Activated T-helper 1 cell treated with anti-CD3 and anti-CD28 coated beads, Interleukin-12 subunit alpha, Interleukin-12 subunit beta, Interleukin-2, Interleukin-4 antibody, amounts not matched to agents 30 ng/mL and 10 ng/mL and 1 ng/mL, durations not matched to agents 14 hours and 24 hours and 36 hours (primary cell): ENCODE measurements at regions of chr9 and their contacts with region 1.

Region 1: GRCh38 chr9:91193658-91194391 is 167.9 kb downstream of the AUH start:
- DNase-seq: peak; percentile 77
- H3K4me3 Mint-ChIP-seq: peak overlapping the region; percentile 71
- H3K27ac Mint-ChIP-seq: peak overlapping the region; percentile 95
- H3K4me1 Mint-ChIP-seq: peaks cover 80% of the 10 kb centered on the region
- H3K27me3 Mint-ChIP-seq: no peaks in the 10 kb centered on the region

Region 2: DNA sequence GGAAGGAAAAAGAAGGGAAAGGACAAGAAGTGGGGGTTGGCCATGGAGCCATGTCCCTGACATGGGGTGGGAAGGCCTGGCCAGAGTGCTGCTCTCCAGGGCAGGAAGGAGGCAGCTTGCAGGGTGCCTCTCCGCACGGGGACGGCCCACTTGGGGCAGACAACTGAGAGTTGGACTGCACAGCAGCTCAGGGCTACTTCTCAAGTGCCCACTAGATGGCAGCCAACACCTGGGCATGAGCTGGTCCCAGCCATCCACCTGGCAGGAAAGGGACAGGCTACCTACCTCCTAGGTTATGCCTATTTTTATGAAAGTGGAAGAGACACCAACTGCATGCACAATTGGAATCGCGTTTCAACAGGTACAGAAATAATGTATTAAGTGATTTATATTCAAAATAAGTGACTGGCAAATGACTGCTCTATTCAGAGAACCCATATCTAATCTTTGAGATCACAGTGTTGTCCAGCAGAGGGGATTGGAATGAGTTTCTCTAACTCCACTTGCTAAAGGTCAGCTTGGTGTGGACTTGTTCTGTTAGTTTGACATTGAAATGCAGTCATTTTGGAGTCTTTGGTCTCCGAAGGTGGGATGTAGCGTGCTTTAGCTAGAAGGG is 278.8 kb before region 1 on chr9:
- intact Hi-C with region 1: loop called (anchors 1 kb)
- DNase-seq: peak; percentile 59
- H3K4me3 Mint-ChIP-seq: no peak overlapping the region
- H3K27ac Mint-ChIP-seq: no peak overlapping the region
- H3K4me1 Mint-ChIP-seq: peaks cover 10% of the 10 kb centered on the region
- H3K27me3 Mint-ChIP-seq: no peaks in the 10 kb centered on the region

Region 3: GRCh38 chr9:91071185-91071990 is 122.4 kb before region 1 on chr9:
- intact Hi-C with region 1: loop called (anchors 1 kb)
- DNase-seq: peak; percentile 35
- H3K4me3 Mint-ChIP-seq: peak overlapping the region; percentile 68
- H3K27ac Mint-ChIP-seq: peak overlapping the region; percentile 96
- H3K4me1 Mint-ChIP-seq: peaks cover 17% of the 10 kb centered on the region
- H3K27me3 Mint-ChIP-seq: peaks cover 2% of the 10 kb centered on the region

Region 4: GRCh38 chr9:91150998-91151717 is 42.7 kb before region 1 on chr9:
- intact Hi-C with region 1: loop called (anchors 1 kb)
- DNase-seq: peak; percentile 70
- H3K4me3 Mint-ChIP-seq: peak overlapping the region; percentile 13
- H3K27ac Mint-ChIP-seq: peak overlapping the region; percentile 94
- H3K4me1 Mint-ChIP-seq: peaks cover 95% of the 10 kb centered on the region
- H3K27me3 Mint-ChIP-seq: no peaks in the 10 kb centered on the region

Region 5: DNA sequence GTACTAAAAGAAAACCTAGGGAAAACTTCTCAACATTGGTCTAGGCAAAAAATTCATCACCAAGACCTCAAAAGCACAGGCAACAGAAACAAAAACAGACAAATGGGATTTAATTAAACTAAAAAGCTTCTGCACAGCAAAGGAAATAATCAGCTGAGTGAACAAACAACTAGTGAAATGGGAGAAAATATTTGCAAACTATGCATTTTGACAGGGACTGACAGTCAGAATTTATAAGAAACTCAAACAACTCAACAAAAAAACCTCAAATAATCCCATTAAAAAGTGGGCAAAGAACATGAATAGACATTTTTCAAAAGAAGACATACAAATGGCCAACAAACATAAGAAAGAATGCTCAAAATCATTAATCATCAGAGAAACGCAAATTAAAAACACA is 21.5 kb before region 1 on chr9:
- intact Hi-C with region 1: no loop called
- DNase-seq: no peak
- H3K4me3 Mint-ChIP-seq: no peak overlapping the region
- H3K27ac Mint-ChIP-seq: no peak overlapping the region
- H3K4me1 Mint-ChIP-seq: peaks cover 56% of the 10 kb centered on the region
- H3K27me3 Mint-ChIP-seq: no peaks in the 10 kb centered on the region

Region 6: GRCh38 chr9:91245431-91246313 is 51.8 kb after region 1 on chr9:
- intact Hi-C with region 1: loop called (anchors 1 kb)
- DNase-seq: peak; percentile 6
- H3K4me3 Mint-ChIP-seq: no peak overlapping the region
- H3K27ac Mint-ChIP-seq: peak overlapping the region; percentile 79
- H3K4me1 Mint-ChIP-seq: peaks cover 56% of the 10 kb centered on the region
- H3K27me3 Mint-ChIP-seq: no peaks in the 10 kb centered on the region

Region 7: DNA sequence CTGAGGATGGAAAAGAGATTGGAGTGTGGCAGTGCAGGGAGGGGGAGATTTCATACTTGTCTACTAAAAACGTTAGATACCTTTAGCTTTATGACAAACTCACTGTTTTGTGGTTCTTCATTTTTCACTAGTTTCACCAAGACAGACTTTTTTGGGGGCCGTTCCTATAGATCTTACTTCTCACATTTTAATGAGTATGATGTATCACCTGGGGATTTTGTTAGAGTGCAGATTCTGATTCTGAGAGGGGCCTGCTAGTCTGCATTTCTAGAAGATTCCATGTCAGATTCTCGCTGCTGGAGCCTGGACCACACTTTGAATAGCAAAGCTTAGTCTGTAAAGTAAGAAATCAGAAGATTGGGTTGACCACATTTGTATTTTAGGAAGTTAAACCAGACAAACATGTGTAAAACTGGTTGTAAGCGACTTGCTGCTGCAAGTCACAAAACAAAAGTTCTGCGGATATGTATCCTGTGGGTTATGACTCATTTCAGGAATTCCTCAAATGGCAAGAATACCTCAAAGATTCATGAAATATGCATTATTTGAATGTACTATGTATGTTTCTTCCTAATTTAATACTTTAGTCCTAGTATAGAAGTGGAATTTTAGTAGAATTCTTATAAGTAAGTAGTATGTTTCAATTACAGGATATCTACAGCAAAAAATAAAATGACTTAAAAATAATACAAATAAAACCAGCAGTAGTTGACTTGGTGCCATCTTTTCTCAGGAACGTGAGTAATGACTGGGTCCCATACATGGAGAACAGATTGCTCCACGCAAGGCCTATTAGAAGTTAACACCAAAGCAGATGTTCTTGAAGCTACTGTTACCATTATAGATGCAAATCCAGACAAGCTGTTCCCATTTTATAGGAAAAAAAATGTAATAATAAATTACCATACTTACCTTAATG is 202.0 kb after region 1 on chr9:
- intact Hi-C with region 1: loop called (anchors 1 kb)
- DNase-seq: peak; percentile 33
- H3K4me3 Mint-ChIP-seq: peak overlapping the region; percentile 73
- H3K27ac Mint-ChIP-seq: peak overlapping the region; percentile 84
- H3K4me1 Mint-ChIP-seq: peaks cover 21% of the 10 kb centered on the region
- H3K27me3 Mint-ChIP-seq: peaks cover 11% of the 10 kb centered on the region

Region 8: DNA sequence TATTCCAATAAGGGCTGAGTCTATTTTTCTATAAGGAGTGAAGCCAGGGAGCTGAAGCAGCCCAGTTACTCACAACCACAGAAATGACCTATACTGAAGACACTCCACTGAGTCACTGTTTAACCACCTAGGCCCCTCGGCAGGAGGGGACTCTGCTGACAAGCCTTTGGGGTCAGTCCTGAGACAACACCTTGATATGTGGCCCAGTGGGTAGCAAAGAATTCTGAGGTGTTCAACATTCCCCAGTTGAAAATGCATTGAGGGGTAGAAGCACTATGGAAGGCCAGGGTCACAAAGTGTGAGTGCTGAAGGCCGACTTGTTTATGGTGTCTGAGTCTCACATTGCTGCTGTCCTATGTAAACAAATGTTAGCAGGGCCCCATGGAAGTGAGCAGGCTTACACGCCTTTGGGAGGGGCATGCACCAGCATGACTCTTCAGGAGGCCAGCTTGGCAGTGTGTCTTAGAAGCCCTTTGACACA is 342.4 kb after region 1 on chr9:
- intact Hi-C with region 1: no loop called
- DNase-seq: no peak
- H3K4me3 Mint-ChIP-seq: no peak overlapping the region
- H3K27ac Mint-ChIP-seq: no peak overlapping the region
- H3K4me1 Mint-ChIP-seq: peaks cover 13% of the 10 kb centered on the region
- H3K27me3 Mint-ChIP-seq: peaks cover 14% of the 10 kb centered on the region